PC-3 (cell line): ENCODE measurements at regions of chr2 and their contacts with region 1.

Region 1: GRCh38 chr2:84999553-84999955 is 28.6 kb downstream of the KCMF1 start:
- DNase-seq: no peak
- ATAC-seq: no peak
- H3K4me3 ChIP-seq: no peak overlapping the region
- H3K27ac ChIP-seq: no peak overlapping the region
- H3K4me1 ChIP-seq: peaks cover 36% of the 10 kb centered on the region
- H3K27me3 ChIP-seq: no peaks in the 10 kb centered on the region
- CTCF ChIP-seq: no peak

Region 2: GRCh38 chr2:85053802-85054201 is 54.2 kb after region 1 on chr2:
- CTCF ChIA-PET with region 1: no interaction called
- POLR2A ChIA-PET with region 1: interaction called, 15 read pairs
- intact Hi-C with region 1: no loop called
- DNase-seq: peak; percentile 91
- ATAC-seq: peak; percentile 100
- H3K4me3 ChIP-seq: peak overlapping the region; percentile 6; the same call in 1 of the 2 replicates
- H3K27ac ChIP-seq: peak overlapping the region; percentile 89
- H3K4me1 ChIP-seq: peaks cover 23% of the 10 kb centered on the region
- H3K27me3 ChIP-seq: no peaks in the 10 kb centered on the region
- CTCF ChIP-seq: no peak